Activated B cell treated with CpG ODN at 0.5 μM for 24 hours (primary cell): ENCODE measurements at regions of chrX and their contacts with region 1.

Region 1: GRCh38 chrX:52261463-52262194 is 76.9 kb downstream of the MAGED4 start:
- DNase-seq: peak; percentile 73
- ATAC-seq: peak; percentile 95
- H3K4me3 Mint-ChIP-seq: peak overlapping the region; percentile 92
- H3K27ac Mint-ChIP-seq: peak overlapping the region; percentile 96
- H3K4me1 Mint-ChIP-seq: peaks cover 11% of the 10 kb centered on the region
- H3K27me3 Mint-ChIP-seq: no peaks in the 10 kb centered on the region
- CTCF ChIP-seq: no peak

Region 2: GRCh38 chrX:51336584-51336983 is 925.0 kb before region 1 on chrX:
- CTCF ChIA-PET with region 1: no interaction called
- POLR2A ChIA-PET with region 1: no interaction called
- intact Hi-C with region 1: loop called (anchors 10 kb)
- DNase-seq: no peak
- ATAC-seq: peak; percentile 71
- H3K4me3 Mint-ChIP-seq: no peak overlapping the region
- H3K27ac Mint-ChIP-seq: no peak overlapping the region
- H3K4me1 Mint-ChIP-seq: peaks cover 9% of the 10 kb centered on the region
- H3K27me3 Mint-ChIP-seq: peaks cover 1% of the 10 kb centered on the region
- CTCF ChIP-seq: no peak

Region 3: GRCh38 chrX:51487960-51488267 is 773.7 kb before region 1 on chrX:
- CTCF ChIA-PET with region 1: interaction called, 3 read pairs
- POLR2A ChIA-PET with region 1: no interaction called
- intact Hi-C with region 1: loop called (anchors 5 kb)
- DNase-seq: no peak
- ATAC-seq: no peak
- H3K4me3 Mint-ChIP-seq: no peak overlapping the region
- H3K27ac Mint-ChIP-seq: no peak overlapping the region
- H3K4me1 Mint-ChIP-seq: no peaks in the 10 kb centered on the region
- H3K27me3 Mint-ChIP-seq: no peaks in the 10 kb centered on the region
- CTCF ChIP-seq: no peak

Region 4: DNA sequence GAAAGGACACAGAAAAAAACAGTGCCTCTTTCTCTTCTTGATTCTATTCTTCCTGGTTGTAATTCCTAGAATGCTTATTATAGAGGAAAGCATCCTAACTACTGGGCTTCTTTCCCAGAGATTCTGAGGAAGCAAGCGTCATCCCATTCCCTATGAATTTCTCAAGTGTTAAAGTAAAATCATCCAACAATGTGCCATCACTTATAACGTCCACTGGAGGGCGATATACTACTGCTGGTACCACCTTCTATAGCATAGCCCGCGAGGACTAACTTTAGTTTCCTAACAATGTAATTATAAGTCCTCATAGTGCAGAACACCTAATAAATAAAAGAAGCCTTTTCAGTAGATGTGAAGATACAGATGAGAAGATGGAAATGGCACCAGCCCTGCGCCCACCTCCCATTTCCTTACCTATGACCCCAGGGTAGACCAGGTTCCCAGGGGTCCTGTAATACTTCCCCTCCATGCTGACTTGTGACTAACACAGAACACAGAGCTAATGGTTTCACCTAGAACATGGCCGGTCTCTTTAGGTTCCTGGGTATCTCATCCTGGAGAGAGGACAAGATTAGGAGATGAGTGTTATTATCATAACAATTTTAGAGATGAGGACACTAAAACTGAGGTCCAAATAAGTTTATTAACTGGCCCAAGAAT is 647.1 kb before region 1 on chrX:
- CTCF ChIA-PET with region 1: no interaction called
- POLR2A ChIA-PET with region 1: interaction called, 3 read pairs
- intact Hi-C with region 1: loop called (anchors 1 kb)
- DNase-seq: no peak
- ATAC-seq: no peak
- H3K4me3 Mint-ChIP-seq: no peak overlapping the region
- H3K27ac Mint-ChIP-seq: no peak overlapping the region
- H3K4me1 Mint-ChIP-seq: peaks cover 3% of the 10 kb centered on the region
- H3K27me3 Mint-ChIP-seq: peaks cover 20% of the 10 kb centered on the region
- CTCF ChIP-seq: no peak

Region 5: DNA sequence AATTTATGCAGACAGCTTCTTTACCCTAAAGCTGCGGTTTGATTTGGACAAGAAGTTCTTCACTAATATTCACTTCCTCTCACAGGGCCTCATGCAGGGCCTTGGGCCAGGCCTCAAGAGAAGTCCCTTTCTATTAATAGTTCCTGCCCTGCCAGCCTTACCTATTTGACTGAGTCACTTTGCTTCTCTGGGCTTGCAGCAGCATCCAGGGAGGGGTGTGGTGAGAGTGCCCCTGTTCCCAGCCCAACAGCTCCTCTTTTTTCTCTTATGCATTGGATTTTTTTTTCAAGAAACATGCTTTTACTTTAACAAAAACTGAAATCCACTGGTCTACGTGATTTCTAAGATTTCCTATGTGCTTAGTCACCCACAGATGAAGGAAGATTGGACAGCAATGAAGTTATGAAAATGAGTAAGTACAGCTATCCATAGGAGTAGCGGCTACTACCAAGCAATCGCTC is 662.2 kb after region 1 on chrX:
- CTCF ChIA-PET with region 1: no interaction called
- POLR2A ChIA-PET with region 1: interaction called, 18 read pairs
- intact Hi-C with region 1: no loop called
- DNase-seq: no peak
- ATAC-seq: peak; percentile 25
- H3K4me3 Mint-ChIP-seq: peak overlapping the region; percentile 58
- H3K27ac Mint-ChIP-seq: peak overlapping the region; percentile 78
- H3K4me1 Mint-ChIP-seq: peaks cover 34% of the 10 kb centered on the region
- H3K27me3 Mint-ChIP-seq: no peaks in the 10 kb centered on the region
- CTCF ChIP-seq: no peak